Heart right ventricle (tissue), 16 donors: ENCODE measurements at regions of chr5 and their contacts with region 1.

Region 1: GRCh38 chr5:146965761-146966659 is 87.5 kb upstream of the PPP2R2B start:
- DNase-seq: peak in 1 of 2 donors; percentile 70
- ATAC-seq: peak; percentile 75 to 96 (median 90)
- H3K4me3 ChIP-seq: no peak overlapping the region
- H3K27ac ChIP-seq: no peak overlapping the region
- H3K4me1 ChIP-seq: no peaks in the 10 kb centered on the region
- H3K27me3 ChIP-seq: no peaks in the 10 kb centered on the region
- CTCF ChIP-seq: peak; percentile 71 to 93 (median 89)

Region 2: DNA sequence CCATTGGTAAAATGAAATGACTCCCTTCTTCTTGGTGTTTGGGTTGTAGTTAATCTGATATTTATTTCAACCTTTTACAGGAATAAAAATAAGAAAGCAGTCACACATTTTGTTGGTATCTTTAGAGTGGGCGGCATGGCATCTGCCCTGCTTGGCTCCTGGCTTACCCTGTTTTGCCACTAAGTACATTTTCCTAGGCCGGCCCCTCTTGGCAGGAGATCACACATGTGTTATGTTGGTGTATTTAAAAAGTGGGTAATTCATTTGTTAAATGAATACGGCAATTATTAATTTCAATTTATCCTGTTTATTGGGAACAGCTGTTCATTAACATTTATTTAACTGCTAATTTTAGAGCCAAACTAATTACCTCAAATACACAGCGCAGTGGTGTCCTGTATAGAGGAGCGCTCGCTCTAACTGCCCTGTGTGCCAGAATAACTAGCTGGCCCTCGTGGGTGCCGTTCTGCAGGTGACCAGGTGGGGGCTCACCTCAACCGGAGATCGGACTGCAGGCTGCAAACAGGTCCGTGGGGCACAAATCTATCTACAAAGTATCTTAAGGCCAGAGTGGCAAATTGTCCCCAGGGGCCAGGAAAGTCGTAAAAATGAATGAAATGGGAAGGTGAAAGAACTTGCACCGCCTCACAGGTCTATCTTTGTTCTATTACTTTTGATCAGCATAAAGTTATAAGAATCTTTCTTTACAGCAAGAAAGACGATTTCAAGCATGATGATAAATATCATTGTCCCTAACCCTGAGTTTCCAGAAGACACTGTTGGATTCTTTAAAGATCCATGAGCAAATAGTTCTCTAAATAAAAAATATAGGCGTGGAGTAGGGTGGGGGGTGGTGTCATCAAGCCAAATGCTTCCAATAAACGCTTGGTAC is 423.8 kb before region 1 on chr5:
- intact Hi-C with region 1: loop called (anchors 1 to 5 kb)
- DNase-seq: peak; percentile 55 to 59
- ATAC-seq: peak in 7 of 8 donors; percentile 49 to 85 (median 76)
- H3K4me3 ChIP-seq: no peak overlapping the region
- H3K27ac ChIP-seq: no peak overlapping the region
- H3K4me1 ChIP-seq: no peaks in the 10 kb centered on the region
- H3K27me3 ChIP-seq: peaks cover 0 to 5% (median 0%) of the 10 kb centered on the region in 7 donors
- CTCF ChIP-seq: peak; percentile 46 to 82 (median 76)

Region 3: DNA sequence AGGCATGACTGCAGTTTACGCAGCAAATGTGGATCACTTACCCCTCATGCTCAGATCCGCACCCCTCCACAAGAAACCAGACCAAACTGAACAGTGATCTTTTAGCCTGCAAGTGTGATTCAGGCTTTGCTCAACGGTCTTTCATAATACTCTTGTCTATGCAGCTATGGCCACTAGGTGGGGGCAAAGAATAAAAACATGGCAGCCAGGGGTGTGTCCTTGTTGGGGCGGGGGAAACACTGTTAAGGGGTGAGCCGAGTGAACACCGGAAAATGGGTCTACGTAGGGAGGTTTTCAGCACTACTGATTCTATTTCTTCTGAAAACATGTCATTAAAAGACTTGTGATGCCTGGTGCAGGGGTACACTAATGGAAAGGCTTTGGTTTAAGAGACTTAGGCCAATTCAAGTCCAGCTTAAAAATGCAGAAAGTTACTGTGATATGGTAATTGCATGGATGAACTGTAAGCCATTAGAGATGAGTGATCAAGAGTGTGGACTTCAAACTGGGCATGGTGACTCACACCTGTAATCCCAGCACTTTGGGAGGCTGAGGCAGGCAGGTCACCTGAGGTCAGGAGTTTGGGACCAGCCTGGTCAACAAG is 400.1 kb before region 1 on chr5:
- intact Hi-C with region 1: loop called in 1 of 10 experiments (anchors 5 kb)
- DNase-seq: peak in 1 of 2 donors; percentile 29
- ATAC-seq: peak in 6 of 8 donors; percentile 33 to 77 (median 57)
- H3K4me3 ChIP-seq: no peak overlapping the region
- H3K27ac ChIP-seq: no peak overlapping the region
- H3K4me1 ChIP-seq: peaks cover 0 to under 1% (median 0%) of the 10 kb centered on the region in 9 donors
- H3K27me3 ChIP-seq: no peaks in the 10 kb centered on the region
- CTCF ChIP-seq: peak in 8 of 9 donors; percentile 11 to 58 (median 46)

Region 4: DNA sequence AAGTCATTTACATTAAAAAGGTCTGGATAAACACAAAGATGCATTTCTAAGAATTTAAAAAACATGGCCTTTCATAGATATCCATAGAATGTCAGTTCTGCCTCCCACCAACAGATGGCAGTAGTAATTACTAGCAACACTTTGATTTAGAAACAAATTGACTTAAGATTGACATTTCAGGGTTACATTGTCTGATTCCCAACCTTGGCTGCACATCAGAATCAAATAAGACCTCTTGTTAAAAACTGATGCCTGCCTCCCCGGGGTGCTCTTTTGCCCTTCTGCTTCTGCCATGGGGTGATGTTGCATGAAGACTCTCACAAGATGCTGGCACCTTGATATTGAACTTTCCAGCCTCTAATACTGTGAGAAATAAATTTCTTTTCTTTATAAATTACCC is 303.8 kb before region 1 on chr5:
- intact Hi-C with region 1: loop called in 4 of 10 experiments (anchors 5 to 10 kb)
- DNase-seq: no peak
- ATAC-seq: no peak
- H3K4me3 ChIP-seq: no peak overlapping the region
- H3K27ac ChIP-seq: no peak overlapping the region
- H3K4me1 ChIP-seq: no peaks in the 10 kb centered on the region
- H3K27me3 ChIP-seq: no peaks in the 10 kb centered on the region
- CTCF ChIP-seq: peak in 8 of 9 donors; percentile 17 to 60 (median 50)

Region 5: DNA sequence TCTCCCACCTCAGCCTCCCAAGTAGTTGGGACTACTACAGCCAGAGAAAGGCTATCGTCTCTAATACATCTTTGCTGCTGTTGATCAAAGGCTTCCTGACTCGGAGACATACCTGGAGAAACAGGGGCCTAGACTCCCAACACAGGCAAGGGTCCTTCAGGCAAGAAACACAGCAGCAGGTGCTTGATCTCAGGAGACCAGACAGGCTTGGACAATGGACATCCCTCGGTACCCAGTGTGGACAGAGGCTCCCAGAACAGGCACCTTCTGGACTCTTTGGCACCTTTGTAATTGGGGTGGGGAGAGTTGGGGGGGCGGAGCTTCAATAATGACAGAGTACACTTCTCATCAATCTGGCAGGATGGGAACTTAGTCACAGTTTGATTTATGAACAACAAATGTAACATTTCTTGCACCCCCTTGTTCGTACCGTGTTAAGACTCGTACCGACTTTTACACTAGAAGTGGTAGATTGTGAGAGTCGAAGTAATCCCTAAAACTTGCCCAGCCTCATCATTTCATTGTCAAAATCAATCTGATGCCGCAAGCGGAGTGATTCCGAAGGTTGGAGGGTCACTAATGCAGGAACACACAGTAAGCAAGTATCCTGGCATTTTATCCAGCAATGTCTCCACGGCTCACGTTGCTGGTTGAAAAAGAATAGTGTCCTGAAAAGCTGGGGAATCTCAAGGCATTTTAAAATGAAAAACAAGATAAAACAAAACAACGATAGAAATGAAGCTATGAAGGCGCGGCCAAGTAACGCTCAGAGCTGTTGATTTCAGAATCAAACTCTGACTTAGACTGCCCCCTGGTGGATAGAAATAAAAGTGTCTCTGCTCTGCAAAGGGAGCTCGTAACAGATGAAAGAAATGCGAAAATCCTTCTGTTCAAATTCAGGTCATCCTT is 222.4 kb after region 1 on chr5:
- intact Hi-C with region 1: loop called in 1 of 10 experiments (anchors 10 kb)
- DNase-seq: peak in 1 of 2 donors; percentile 59
- ATAC-seq: peak in 5 of 8 donors; percentile 46 to 76 (median 63)
- H3K4me3 ChIP-seq: no peak overlapping the region
- H3K27ac ChIP-seq: no peak overlapping the region
- H3K4me1 ChIP-seq: peaks cover 0 to 4% (median 0%) of the 10 kb centered on the region in 9 donors
- H3K27me3 ChIP-seq: peaks cover 0 to 16% (median 3%) of the 10 kb centered on the region in 7 donors
- CTCF ChIP-seq: peak; percentile 72 to 93 (median 86)